Activated CD8-positive, alpha-beta T cell treated with anti-CD3 and anti-CD28 coated beads, Interleukin-2, amount 10 ng/mL, durations not matched to agents 7 days and 5 days (primary cell): ENCODE measurements at regions of chr14 and their contacts with region 1.

Region 1: DNA sequence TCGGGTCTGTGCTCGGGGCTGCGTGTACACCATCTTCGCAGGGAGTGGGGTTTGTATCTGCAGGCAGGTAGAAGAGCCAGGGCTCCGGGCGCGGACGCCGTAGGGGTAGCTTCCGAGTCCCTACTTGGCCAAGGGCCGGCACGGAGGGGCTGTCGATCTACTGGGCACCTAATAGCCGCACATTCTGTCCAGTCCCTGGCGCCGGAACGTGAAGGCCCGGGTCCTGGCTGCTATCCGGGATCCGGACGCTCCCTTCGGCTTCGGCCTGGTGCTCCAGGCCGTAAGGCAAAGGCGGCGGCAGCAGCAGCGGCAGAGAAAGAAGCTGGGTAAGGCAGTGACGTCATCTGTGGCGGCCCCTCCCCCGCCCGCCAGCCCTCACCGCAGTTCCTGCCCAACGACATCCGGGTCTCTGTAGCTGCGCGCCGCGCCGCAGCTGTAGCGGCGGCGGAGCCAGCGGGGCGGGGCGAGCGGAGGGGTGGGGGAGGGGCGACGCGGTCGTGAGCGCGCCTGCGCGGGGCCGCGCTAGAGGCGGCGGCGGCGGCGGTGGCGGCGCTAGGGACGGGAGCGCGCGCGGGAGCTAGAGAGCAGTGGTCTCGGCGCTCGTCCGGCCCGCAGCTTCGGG is at the start of gene PPM1A:
- DNase-seq: peak; percentile 95
- ATAC-seq: peak; percentile 74
- H3K4me3 Mint-ChIP-seq: peak within 1 kb of the TSS; percentile 93
- H3K27ac Mint-ChIP-seq: peak within 1 kb of the TSS; percentile 100
- H3K4me1 Mint-ChIP-seq: peaks cover 56% of the 10 kb centered on the region
- H3K27me3 Mint-ChIP-seq: no peaks in the 10 kb centered on the region
- total RNA-seq, gene PPM1A: 45.2 to 50.1 TPM

Region 2: DNA sequence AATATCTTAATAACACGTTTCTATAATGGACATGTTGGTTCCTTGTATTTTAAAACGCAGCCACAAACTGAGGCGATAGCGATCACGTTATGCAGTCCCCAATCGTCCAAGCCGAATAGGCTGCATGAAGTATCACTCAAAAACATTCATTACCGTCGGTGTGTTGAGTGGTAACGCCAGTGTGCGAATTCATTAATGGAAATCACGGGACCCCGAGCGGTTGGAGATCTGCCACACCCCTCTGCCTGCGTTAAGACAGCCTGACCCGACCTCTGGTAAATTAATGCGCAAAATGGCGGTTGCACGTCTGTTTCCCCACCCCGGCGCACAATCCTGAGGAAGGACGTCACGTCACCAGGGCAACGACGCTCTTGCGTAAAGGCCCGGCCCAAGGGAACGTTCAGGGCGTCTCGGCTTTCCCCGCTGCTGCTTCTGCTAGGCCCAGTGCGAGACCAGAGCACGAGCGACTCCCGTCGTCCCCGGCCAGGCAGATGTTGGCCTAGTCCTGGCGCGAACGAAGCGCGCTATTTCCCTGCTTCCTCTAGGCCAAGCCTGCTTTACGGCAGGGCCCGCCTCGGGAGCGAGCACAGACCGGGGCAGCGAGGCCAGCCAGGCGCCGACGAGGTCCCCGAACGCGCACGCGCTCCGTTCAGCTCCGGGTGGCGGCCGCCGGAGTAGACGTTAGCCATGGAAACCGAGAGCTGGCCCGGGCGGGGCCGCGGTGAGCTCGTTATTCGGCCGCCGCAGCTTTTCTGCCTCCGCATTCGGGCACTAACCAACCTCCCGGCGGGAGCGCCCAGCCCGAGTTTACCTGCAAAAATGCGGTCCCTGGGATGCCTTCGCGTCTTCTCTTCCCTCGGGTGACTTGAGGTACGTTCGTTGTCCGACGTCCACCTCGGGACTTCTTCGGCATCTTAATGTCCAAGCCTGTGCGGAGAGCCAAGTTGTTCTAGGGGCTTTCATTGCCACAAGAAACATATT is 157.0 kb before region 1 on chr14 and contains the start of gene PCNX4:
- CTCF ChIA-PET with region 1: interaction called, 3 read pairs
- POLR2A ChIA-PET with region 1: interaction called, 24 read pairs
- DNase-seq: peak; percentile 96
- ATAC-seq: peak; percentile 94
- H3K4me3 Mint-ChIP-seq: peak within 1 kb of the TSS; percentile 94
- H3K27ac Mint-ChIP-seq: peak within 1 kb of the TSS; percentile 96
- H3K4me1 Mint-ChIP-seq: peaks cover 35% of the 10 kb centered on the region
- H3K27me3 Mint-ChIP-seq: no peaks in the 10 kb centered on the region
- total RNA-seq, gene PCNX4: 35.4 to 36.6 TPM

Region 3: GRCh38 chr14:60227291-60227690 is 21.5 kb before region 1 on chr14:
- CTCF ChIA-PET with region 1: no interaction called
- POLR2A ChIA-PET with region 1: no interaction called
- DNase-seq: no peak
- ATAC-seq: no peak
- H3K4me3 Mint-ChIP-seq: no peak overlapping the region
- H3K27ac Mint-ChIP-seq: no peak overlapping the region
- H3K4me1 Mint-ChIP-seq: no peaks in the 10 kb centered on the region
- H3K27me3 Mint-ChIP-seq: peaks cover under 1% of the 10 kb centered on the region

Region 4: DNA sequence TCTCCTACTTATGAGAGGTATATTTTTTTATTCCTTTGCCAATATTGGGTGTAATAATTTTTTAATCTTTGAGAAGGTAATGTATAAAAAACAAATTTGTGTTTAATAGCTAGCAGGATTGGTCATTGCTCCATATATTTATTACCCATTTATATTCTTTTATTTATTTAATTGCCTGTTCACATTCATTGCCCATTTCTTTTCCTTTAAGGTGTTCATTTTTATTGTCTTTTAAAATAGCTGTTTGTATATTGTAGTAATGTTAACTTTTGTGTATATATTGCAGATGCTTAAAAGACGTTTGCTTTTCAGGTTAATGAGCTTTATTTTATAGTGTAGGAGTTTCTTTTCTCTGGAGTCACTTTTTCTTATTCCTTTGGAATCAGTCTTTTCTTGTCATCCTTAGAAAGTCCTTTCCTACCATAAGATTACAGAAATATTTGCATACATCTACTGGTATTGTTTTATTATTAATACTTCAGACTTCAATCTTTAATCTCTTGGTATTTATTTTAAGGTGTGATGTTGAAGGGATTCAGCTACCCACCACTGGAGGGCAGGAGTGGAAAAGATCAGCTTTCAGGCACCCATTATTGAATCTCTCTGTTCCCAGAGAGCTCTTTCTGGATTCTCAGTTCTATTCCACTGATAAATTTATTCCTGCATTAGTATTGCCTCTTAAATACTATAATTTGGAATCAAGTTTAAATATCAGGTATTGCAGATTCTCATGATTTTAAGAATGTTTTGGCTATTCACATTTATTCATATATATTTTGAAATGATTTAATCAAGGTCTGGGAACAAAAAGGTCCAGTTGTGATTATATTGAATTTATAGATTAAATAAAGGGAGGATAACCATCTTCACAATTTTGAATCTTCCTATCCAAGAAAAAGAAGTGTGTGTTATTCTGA is 17.5 kb after region 1 on chr14:
- CTCF ChIA-PET with region 1: interaction called, 12 read pairs
- POLR2A ChIA-PET with region 1: interaction called, 4 read pairs
- DNase-seq: no peak
- ATAC-seq: no peak
- H3K4me3 Mint-ChIP-seq: no peak overlapping the region
- H3K27ac Mint-ChIP-seq: no peak overlapping the region
- H3K4me1 Mint-ChIP-seq: peaks cover 3% of the 10 kb centered on the region
- H3K27me3 Mint-ChIP-seq: no peaks in the 10 kb centered on the region

Region 5: DNA sequence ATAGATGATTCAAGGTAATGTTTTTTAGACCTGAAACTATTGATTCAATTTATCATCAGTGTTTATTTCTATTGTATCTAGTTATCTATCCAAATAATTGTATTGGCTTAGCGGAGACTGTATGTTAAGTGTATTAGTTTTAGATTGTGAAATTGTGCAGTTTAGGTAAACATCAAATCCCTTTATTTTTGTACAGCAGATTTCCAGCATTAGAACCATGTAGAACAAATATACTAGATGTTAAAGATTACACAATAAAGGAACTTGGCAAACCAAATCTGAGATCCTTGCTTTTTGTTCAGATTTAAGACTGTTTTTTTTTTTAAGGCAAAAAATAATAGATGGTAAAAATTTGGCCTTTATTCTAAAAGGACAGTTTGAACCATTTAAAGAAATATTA is 39.5 kb after region 1 on chr14:
- CTCF ChIA-PET with region 1: no interaction called
- POLR2A ChIA-PET with region 1: no interaction called
- DNase-seq: no peak
- ATAC-seq: no peak
- H3K4me3 Mint-ChIP-seq: no peak overlapping the region
- H3K27ac Mint-ChIP-seq: no peak overlapping the region
- H3K4me1 Mint-ChIP-seq: no peaks in the 10 kb centered on the region
- H3K27me3 Mint-ChIP-seq: no peaks in the 10 kb centered on the region

Region 6: GRCh38 chr14:60420050-60420449 is 171.2 kb after region 1 on chr14:
- CTCF ChIA-PET with region 1: no interaction called
- POLR2A ChIA-PET with region 1: no interaction called
- DNase-seq: no peak
- ATAC-seq: no peak
- H3K4me3 Mint-ChIP-seq: no peak overlapping the region
- H3K27ac Mint-ChIP-seq: no peak overlapping the region
- H3K4me1 Mint-ChIP-seq: no peaks in the 10 kb centered on the region
- H3K27me3 Mint-ChIP-seq: no peaks in the 10 kb centered on the region

Region 7: DNA sequence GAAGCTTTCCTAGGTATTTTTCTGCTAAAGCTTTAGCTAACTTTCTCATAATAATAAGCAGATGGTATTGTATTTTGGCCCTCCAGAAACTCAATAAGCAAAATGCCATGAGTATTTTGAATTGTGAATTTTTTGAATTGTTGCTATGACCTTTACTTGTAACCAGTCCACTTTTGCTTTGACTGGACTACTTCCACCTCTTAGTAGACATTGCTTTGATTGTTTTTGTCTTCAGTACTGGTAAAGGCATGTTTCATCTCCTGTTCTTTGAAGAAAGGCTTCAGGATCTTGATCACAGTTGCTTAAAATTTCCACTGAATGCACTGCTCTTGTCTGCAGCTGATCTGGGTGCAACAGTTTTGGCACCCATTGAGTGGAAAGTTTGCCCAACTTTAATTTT is 629.7 kb after region 1 on chr14:
- CTCF ChIA-PET with region 1: no interaction called
- POLR2A ChIA-PET with region 1: no interaction called
- DNase-seq: no peak
- ATAC-seq: no peak
- H3K4me3 Mint-ChIP-seq: no peak overlapping the region
- H3K27ac Mint-ChIP-seq: no peak overlapping the region
- H3K4me1 Mint-ChIP-seq: no peaks in the 10 kb centered on the region
- H3K27me3 Mint-ChIP-seq: no peaks in the 10 kb centered on the region